ENCODE measurements at regions of chr22 and their contacts with region 1.

Region 1: GRCh38 chr22:44975427-44976262 is 34.2 kb downstream of the PHF21B start:
- DNase-seq: peak; percentile 49 to 87 (median 77)
- ATAC-seq: peak; percentile 79 to 100 (median 94)
- H3K4me3 ChIP-seq: no peak overlapping the region
- H3K27ac ChIP-seq: no peak overlapping the region
- H3K4me1 ChIP-seq: no peaks in the 10 kb centered on the region
- H3K27me3 ChIP-seq: no peaks in the 10 kb centered on the region
- CTCF ChIP-seq: peak in 3 of 4 donors; percentile 30 to 48 (median 45)

Region 2: DNA sequence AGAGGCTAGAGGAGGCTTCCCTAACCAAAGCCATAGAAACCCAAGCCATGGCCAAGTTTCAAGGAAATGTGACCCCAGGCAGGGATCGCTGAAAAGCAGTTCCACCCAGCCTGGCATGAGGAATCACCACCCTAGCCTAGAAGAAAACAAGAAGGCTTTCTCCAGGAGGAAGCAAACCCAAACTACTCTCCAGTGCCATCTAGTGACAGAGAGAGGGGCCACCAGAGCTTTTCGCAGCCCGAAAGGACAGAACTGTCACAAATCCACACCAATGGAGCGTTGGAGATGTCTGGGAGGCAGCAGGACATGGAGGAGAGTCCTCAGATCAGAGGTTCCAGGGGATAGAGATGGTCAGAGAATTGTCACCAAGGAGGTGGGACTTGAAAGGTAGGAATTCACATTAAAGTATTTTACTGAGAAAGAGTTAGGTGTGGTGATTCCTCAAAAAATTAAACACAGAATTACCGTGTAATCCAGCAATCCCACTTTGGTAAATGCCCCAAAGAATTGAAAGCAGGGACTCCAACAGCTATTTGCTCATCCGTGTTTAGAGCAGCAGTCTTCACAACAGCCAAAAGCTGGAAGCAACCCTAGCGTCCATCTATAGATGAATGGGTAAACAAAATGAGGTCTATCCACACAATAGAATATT is 120.7 kb after region 1 on chr22:
- intact Hi-C with region 1: loop called in 1 of 3 experiments (anchors 10 kb)
- DNase-seq: peak in 4 of 6 donors; percentile 16 to 67 (median 50)
- ATAC-seq: peak in 3 of 4 donors; percentile 83 to 93 (median 87)
- H3K4me3 ChIP-seq: no peak overlapping the region
- H3K27ac ChIP-seq: no peak overlapping the region
- H3K4me1 ChIP-seq: no peaks in the 10 kb centered on the region
- H3K27me3 ChIP-seq: peaks cover 0 to 11% (median 0%) of the 10 kb centered on the region in 4 donors
- CTCF ChIP-seq: peak; percentile 41 to 76 (median 68)